ENCODE measurements at regions of chr10 and their contacts with region 1.

Region 1: DNA sequence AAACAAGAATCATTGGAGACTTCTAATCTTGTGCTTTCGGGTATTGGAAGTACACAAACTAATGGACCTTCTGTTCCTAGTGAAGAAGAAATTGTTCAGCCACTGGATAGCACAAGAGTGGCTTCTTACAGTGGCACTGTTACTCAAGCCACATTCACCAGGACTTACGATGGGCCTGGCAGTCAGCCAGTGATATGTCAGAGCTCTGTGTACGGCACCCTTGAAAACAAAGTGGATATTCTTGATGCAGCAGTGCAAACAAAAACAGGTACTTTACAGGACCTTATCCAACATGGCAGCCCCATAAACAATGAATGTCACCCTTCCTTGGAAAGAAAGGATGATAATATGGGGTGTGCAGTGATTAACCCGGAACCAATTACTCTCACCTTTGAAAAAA is 61.6 kb downstream of the TASOR2 start:
- DNase-seq: no peak
- ATAC-seq: no peak
- H3K4me3 ChIP-seq: no peak overlapping the region
- H3K27ac ChIP-seq: no peak overlapping the region
- H3K4me1 ChIP-seq: no peaks in the 10 kb centered on the region
- H3K27me3 ChIP-seq: no peaks in the 10 kb centered on the region
- CTCF ChIP-seq: no peak
- POLR2A ChIP-seq: no peak

Region 2: GRCh38 chr10:5629303-5630111 is 116.7 kb before region 1 on chr10:
- intact Hi-C with region 1: loop called in 1 of 2 experiments (anchors 10 kb)
- DNase-seq: peak; percentile 67 to 87 (median 77)
- ATAC-seq: peak; percentile 42 to 52 (median 48)
- H3K4me3 ChIP-seq: no peak overlapping the region
- H3K27ac ChIP-seq: peak overlapping the region; percentile 13 to 74 (median 67)
- H3K4me1 ChIP-seq: peaks cover 0 to 67% (median 34%) of the 10 kb centered on the region in 4 donors
- H3K27me3 ChIP-seq: no peaks in the 10 kb centered on the region
- CTCF ChIP-seq: peak; percentile 81 to 94 (median 86)
- POLR2A ChIP-seq: no peak

Region 3: DNA sequence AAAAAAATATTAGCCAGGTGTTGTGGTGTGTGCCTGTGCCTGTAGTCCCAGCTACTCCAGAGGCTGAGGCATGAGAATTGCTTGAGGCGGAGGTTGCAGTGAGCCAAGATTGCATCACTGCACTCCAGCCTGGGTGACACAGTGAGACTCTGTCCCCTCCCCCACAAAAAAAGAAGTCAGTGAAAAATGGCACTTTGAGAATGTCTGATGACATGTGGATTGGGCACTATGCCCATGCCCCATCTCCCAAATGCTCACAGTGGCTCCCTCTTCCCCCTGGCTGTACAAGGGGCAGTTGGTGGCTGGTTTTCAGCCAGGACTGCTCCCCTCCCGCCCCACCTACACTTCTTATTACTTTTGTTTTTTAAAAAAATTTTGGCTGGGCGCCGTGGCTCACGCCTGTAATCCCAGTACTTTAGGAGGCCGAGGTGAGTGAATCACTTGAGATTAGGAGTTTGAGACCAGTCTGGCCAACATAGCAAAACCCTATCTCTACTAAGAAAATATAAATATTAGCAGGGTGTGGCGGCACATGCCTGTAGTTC is 205.0 kb after region 1 on chr10:
- intact Hi-C with region 1: no loop called
- DNase-seq: peak in 2 of 3 donors; percentile 39 to 55
- ATAC-seq: peak; percentile 70 to 75 (median 74)
- H3K4me3 ChIP-seq: no peak overlapping the region
- H3K27ac ChIP-seq: peak overlapping the region; percentile 60 to 83 (median 62)
- H3K4me1 ChIP-seq: peaks cover 0 to 17% (median 6%) of the 10 kb centered on the region in 4 donors
- H3K27me3 ChIP-seq: no peaks in the 10 kb centered on the region
- CTCF ChIP-seq: no peak
- POLR2A ChIP-seq: no peak